BJ (cell line): ENCODE measurements at regions of chr3 and their contacts with region 1.

Region 1: GRCh38 chr3:79543218-79543982 is 224.4 kb downstream of the ROBO1 start:
- DNase-seq: no peak
- H3K4me3 ChIP-seq: no peak overlapping the region
- H3K27me3 ChIP-seq: no peaks in the 10 kb centered on the region
- CTCF ChIP-seq: no peak

Region 2: GRCh38 chr3:79167651-79168416 is 375.6 kb before region 1 on chr3:
- CTCF ChIA-PET with region 1: no interaction called
- POLR2A ChIA-PET with region 1: interaction called, 13 read pairs
- DNase-seq: peak; percentile 85
- H3K4me3 ChIP-seq: no peak overlapping the region
- H3K27me3 ChIP-seq: no peaks in the 10 kb centered on the region
- CTCF ChIP-seq: no peak